ENCODE measurements at regions of chrX and their contacts with region 1.

Region 1: DNA sequence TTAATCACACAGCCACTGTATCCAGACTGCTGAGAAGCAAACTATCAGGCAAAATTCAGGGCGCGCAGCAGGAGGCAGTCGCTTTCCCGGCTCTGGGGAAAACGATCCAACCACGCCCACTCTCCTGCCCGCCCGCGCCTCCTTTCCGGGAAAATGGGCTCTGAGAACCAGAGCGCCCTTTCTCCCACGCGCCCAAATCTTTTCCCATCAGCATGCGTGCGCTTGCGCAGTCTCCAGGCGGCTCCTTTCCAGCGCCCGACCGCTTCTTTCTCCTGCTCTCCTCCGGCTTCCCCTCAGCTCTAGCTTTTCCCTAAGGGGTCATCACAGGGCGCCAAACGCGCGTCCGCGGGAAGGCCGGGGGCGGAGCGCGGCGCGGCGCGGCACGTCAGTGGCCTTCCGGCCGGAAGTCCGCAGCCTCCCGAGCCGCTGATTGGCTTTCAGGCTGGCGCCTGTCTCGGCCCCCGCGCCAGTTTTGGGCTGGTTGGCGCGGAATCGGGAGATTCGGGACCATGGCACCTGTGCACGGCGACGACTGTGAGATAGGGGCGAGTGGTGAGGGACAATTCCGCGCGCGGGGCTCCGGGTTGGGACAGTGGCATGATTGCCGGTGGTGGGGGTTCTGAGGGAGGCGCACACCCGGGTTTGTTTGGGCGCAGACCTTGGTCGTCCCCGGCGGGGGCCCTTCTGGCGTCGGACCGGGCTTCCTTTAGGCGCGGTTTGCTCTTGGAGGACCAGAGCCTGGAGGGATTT is at the start of gene POLA1:
- H3K4me3 Mint-ChIP-seq: peak within 1 kb of the TSS; percentile 90
- H3K27ac Mint-ChIP-seq: peak within 1 kb of the TSS; percentile 94
- H3K4me1 Mint-ChIP-seq: peaks cover 11% of the 10 kb centered on the region
- H3K27me3 Mint-ChIP-seq: no peaks in the 10 kb centered on the region

Region 2: DNA sequence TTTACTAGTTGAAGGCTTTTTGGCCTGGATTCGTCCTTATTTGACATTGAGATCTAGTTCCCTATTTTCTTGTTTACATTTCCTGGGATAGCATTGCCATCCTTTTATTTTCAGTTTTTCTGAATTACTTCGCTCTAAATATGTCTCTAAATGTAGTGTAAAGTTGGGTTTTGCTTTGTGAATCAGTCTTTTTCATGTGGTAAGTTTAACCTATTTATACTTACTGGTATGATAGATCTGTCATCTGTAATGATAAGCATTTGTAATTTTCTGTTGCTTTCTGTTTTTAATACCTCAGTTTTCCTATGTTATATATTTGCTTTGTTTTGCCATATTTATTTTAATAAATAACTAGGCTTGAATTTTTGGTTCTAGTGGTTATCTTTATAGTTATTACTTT is 221.8 kb before region 1 on chrX:
- intact Hi-C with region 1: loop called (anchors 5 kb)
- H3K4me3 Mint-ChIP-seq: no peak overlapping the region
- H3K27ac Mint-ChIP-seq: no peak overlapping the region
- H3K4me1 Mint-ChIP-seq: peaks cover 36% of the 10 kb centered on the region
- H3K27me3 Mint-ChIP-seq: no peaks in the 10 kb centered on the region